ENCODE measurements at regions of chr3 and their contacts with region 1.

Region 1: GRCh38 chr3:18847583-18848197 is 300.6 kb upstream of the KCNH8 start:
- H3K4me3 ChIP-seq: no peak overlapping the region
- H3K27ac ChIP-seq: no peak overlapping the region
- H3K4me1 ChIP-seq: no peaks in the 10 kb centered on the region
- CTCF ChIP-seq: no peak

Region 2: DNA sequence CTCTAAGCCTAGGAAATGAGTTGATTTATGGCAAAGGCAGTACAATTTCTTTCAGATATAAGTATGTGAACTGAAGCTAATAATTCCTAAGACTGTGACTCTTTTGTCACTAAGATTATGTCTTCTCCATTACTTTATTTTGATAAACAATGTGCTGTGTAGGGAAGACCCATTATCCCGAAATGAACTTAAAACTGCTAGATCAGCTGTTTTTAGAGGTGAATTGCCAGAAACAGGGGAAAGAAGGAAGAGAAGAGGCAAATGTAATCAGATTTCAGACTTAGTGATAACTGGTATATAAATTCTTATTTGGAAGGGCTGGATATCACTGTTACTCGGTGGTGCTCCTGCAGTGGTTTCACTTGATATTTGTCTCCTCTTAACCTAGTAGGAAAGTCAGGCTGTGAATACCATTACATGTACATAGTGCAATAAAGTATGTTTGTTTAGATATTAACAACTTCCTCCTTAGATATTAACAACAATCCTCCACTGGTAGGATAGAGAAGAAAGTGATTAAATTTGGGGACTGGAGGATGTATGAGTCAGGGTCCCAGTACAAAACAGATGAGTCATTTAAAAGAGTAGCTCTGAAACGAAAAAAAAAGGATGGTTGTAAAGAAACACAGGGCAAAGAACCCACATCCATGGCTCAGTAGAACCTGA is 37.9 kb before region 1 on chr3:
- CTCF ChIA-PET with region 1: no interaction called
- POLR2A ChIA-PET with region 1: no interaction called
- H3K4me3 ChIP-seq: no peak overlapping the region
- H3K27ac ChIP-seq: no peak overlapping the region
- H3K4me1 ChIP-seq: no peaks in the 10 kb centered on the region
- CTCF ChIP-seq: no peak

Region 3: GRCh38 chr3:18988614-18989229 is 141.0 kb after region 1 on chr3:
- CTCF ChIA-PET with region 1: interaction called, 17 read pairs
- POLR2A ChIA-PET with region 1: no interaction called
- H3K4me3 ChIP-seq: no peak overlapping the region
- H3K27ac ChIP-seq: no peak overlapping the region
- H3K4me1 ChIP-seq: no peaks in the 10 kb centered on the region
- CTCF ChIP-seq: 0 out of 2 replicates have a peak, but pooled peaks have one; percentile 22